ENCODE measurements at regions of chr10 and their contacts with region 1.

Region 1: GRCh38 chr10:102064868-102065560 is at the start of gene HPS6:
- DNase-seq: peak; percentile 90
- ATAC-seq: peak; percentile 98
- H3K4me3 ChIP-seq: peak within 1 kb of the TSS; percentile 51 to 89 (median 73)
- H3K4me3 Mint-ChIP-seq: peak within 1 kb of the TSS; percentile 92
- H3K27ac ChIP-seq: peak within 1 kb of the TSS; percentile 63 to 90
- H3K27ac Mint-ChIP-seq: peak within 1 kb of the TSS; percentile 92
- H3K4me1 ChIP-seq: peaks cover 15 to 20% of the 10 kb centered on the region in 2 donors
- H3K4me1 Mint-ChIP-seq: peaks cover 23% of the 10 kb centered on the region
- H3K27me3 ChIP-seq: no peaks in the 10 kb centered on the region
- H3K27me3 Mint-ChIP-seq: no peaks in the 10 kb centered on the region
- CTCF ChIP-seq: no peak
- total RNA-seq, gene HPS6: 28.6 and 29.5 TPM in 2 replicates

Region 2: GRCh38 chr10:100728928-100729861 is 1335.8 kb before region 1 on chr10:
- CTCF ChIA-PET with region 1: no interaction called
- POLR2A ChIA-PET with region 1: no interaction called
- intact Hi-C with region 1: no loop called
- DNase-seq: peak; percentile 52
- ATAC-seq: peak; percentile 39
- H3K4me3 ChIP-seq: peak overlapping the region in 2 of 5 experiments; percentile 19 to 45
- H3K4me3 Mint-ChIP-seq: peak overlapping the region; percentile 73
- H3K27ac ChIP-seq: no peak overlapping the region
- H3K27ac Mint-ChIP-seq: no peak overlapping the region
- H3K4me1 ChIP-seq: peaks cover 28 to 32% of the 10 kb centered on the region in 2 donors
- H3K4me1 Mint-ChIP-seq: peaks cover 30% of the 10 kb centered on the region
- H3K27me3 ChIP-seq: peaks cover 0 to 90% (median 50%) of the 10 kb centered on the region in 4 experiments
- H3K27me3 Mint-ChIP-seq: peaks cover 78% of the 10 kb centered on the region
- CTCF ChIP-seq: peak; percentile 16

Region 3: GRCh38 chr10:101807158-101807557 is 257.9 kb before region 1 on chr10:
- CTCF ChIA-PET with region 1: no interaction called
- POLR2A ChIA-PET with region 1: no interaction called
- intact Hi-C with region 1: no loop called
- DNase-seq: no peak
- ATAC-seq: no peak
- H3K4me3 ChIP-seq: no peak overlapping the region
- H3K4me3 Mint-ChIP-seq: no peak overlapping the region
- H3K27ac ChIP-seq: peak overlapping the region in 1 of 2 donors; percentile 3
- H3K27ac Mint-ChIP-seq: no peak overlapping the region
- H3K4me1 ChIP-seq: peaks cover 0 to under 1% of the 10 kb centered on the region in 2 donors
- H3K4me1 Mint-ChIP-seq: peaks cover 16% of the 10 kb centered on the region
- H3K27me3 ChIP-seq: no peaks in the 10 kb centered on the region
- H3K27me3 Mint-ChIP-seq: no peaks in the 10 kb centered on the region
- CTCF ChIP-seq: no peak

Region 4: DNA sequence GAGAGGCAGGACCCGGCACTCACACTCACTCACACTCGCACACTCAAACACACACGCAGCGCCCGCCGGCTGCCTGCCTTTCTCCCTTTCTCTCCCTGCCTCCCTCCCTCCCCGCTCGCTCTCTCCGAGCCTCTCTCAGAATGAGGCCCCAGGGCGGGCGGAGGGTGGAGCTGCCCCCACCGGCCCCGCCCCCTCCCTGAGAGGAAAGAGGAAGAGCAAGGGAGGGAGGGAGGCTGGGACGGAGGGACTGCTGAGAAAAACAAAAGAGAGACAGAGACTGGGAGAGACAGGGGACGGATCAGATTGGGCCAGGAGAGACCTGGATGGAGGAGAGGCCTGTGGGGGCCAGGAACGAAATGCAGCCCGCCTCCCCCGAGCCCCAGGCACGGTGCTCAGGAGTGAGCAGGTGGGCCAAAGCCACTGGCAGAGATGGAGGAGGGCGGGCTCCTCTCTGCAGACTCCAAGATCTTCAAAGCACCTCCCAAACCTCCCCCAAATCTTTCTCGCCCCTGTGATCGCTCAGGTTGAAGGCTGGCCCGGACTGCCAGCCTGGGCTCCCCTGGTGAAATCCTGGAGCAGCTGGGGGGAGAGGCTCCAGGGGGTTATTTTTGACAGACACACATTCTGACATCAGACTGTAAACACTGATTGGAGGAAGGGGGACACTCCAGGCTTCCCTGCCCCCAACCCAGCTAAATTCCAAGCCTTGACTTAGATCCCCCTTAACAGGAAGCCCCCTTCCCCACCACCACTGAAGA is 50.0 kb after region 1 on chr10:
- CTCF ChIA-PET with region 1: interaction called, 6 read pairs
- POLR2A ChIA-PET with region 1: interaction called, 4 read pairs
- intact Hi-C with region 1: loop called (anchors 1 kb)
- DNase-seq: peak; percentile 87
- ATAC-seq: peak; percentile 79
- H3K4me3 ChIP-seq: peak overlapping the region; percentile 45 to 64 (median 57)
- H3K4me3 Mint-ChIP-seq: peak overlapping the region; percentile 86
- H3K27ac ChIP-seq: peak overlapping the region; percentile 60 to 94
- H3K27ac Mint-ChIP-seq: peak overlapping the region; percentile 91
- H3K4me1 ChIP-seq: peaks cover 58 to 73% of the 10 kb centered on the region in 2 donors
- H3K4me1 Mint-ChIP-seq: peaks cover 63% of the 10 kb centered on the region
- H3K27me3 ChIP-seq: no peaks in the 10 kb centered on the region
- H3K27me3 Mint-ChIP-seq: no peaks in the 10 kb centered on the region
- CTCF ChIP-seq: no peak

Region 5: DNA sequence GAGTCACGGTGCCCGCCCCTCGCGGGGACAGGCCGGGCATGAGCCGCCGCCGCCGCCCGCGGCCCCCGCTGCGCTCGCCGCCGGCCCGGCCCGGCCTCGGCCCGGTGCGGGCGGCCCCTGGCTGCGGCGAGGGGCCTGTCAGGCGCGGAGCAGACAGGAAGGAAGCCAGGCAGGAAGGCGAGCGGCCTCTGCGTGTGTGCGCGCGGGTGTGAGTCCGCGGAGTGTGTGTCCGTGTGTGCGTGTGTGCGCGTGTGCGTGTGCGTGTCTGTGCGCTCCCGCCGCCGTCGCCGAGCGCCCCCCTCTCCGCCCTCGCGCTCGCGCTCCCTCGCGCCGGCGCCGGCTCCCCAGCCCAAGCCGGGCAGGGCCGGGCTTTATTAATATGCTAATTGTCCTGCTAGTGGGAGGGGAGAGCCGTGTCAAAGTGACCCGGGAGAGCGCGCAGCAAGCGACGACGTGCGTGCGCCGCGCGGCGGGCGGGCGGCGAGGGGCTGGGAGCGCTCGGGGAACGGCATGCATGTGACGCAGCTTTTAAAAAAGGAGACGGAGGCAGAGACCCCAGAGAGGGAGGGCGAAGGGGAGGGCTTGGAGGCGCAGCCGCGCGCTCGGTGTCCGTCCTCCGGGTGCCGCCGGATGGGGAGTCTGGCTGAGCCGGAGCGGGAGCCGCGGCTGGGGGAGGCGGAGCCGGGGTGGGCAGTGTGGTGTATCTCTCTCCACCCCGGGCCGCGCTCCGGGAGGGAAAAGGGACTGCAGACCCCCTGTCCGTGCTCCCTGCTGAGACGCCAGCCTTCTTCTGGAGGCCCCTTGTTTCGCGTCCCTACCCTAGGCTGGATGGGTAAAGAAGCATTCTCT is 55.4 kb after region 1 on chr10 and contains the start of gene LDB1:
- CTCF ChIA-PET with region 1: interaction called, 6 read pairs
- POLR2A ChIA-PET with region 1: no interaction called
- intact Hi-C with region 1: loop called (anchors 1 kb)
- DNase-seq: peak; percentile 89
- ATAC-seq: peak; percentile 61
- H3K4me3 ChIP-seq: peak within 1 kb of the TSS; percentile 71 to 95 (median 90)
- H3K4me3 Mint-ChIP-seq: peak within 1 kb of the TSS; percentile 97
- H3K27ac ChIP-seq: peak within 1 kb of the TSS; percentile 87 to 94
- H3K27ac Mint-ChIP-seq: peak within 1 kb of the TSS; percentile 99
- H3K4me1 ChIP-seq: peaks cover 45 to 55% of the 10 kb centered on the region in 2 donors
- H3K4me1 Mint-ChIP-seq: peaks cover 55% of the 10 kb centered on the region
- H3K27me3 ChIP-seq: no peaks in the 10 kb centered on the region
- H3K27me3 Mint-ChIP-seq: no peaks in the 10 kb centered on the region
- CTCF ChIP-seq: no peak
- total RNA-seq, gene LDB1: 111 and 114 TPM in 2 replicates

Region 6: GRCh38 chr10:102245101-102245931 is 180.3 kb after region 1 on chr10 and contains the start of gene GBF1:
- CTCF ChIA-PET with region 1: no interaction called
- POLR2A ChIA-PET with region 1: no interaction called
- intact Hi-C with region 1: loop called (anchors 10 kb)
- DNase-seq: peak; percentile 98
- ATAC-seq: peak; percentile 86
- H3K4me3 ChIP-seq: peak within 1 kb of the TSS; percentile 80 to 99 (median 98)
- H3K4me3 Mint-ChIP-seq: peak within 1 kb of the TSS; percentile 94
- H3K27ac ChIP-seq: peak within 1 kb of the TSS; percentile 86 to 90
- H3K27ac Mint-ChIP-seq: peak within 1 kb of the TSS; percentile 38
- H3K4me1 ChIP-seq: peaks cover 50 to 51% of the 10 kb centered on the region in 2 donors
- H3K4me1 Mint-ChIP-seq: peaks cover 56% of the 10 kb centered on the region
- H3K27me3 ChIP-seq: peaks cover 0 to 31% (median 27%) of the 10 kb centered on the region in 4 experiments
- H3K27me3 Mint-ChIP-seq: peaks cover 23% of the 10 kb centered on the region
- CTCF ChIP-seq: no peak
- total RNA-seq, gene GBF1: 39.3 and 41.2 TPM in 2 replicates

Measured in B cell (primary cell).